Prostate gland (tissue), 2 donors: ENCODE measurements at regions of chr2 and their contacts with region 1.

Region 1: DNA sequence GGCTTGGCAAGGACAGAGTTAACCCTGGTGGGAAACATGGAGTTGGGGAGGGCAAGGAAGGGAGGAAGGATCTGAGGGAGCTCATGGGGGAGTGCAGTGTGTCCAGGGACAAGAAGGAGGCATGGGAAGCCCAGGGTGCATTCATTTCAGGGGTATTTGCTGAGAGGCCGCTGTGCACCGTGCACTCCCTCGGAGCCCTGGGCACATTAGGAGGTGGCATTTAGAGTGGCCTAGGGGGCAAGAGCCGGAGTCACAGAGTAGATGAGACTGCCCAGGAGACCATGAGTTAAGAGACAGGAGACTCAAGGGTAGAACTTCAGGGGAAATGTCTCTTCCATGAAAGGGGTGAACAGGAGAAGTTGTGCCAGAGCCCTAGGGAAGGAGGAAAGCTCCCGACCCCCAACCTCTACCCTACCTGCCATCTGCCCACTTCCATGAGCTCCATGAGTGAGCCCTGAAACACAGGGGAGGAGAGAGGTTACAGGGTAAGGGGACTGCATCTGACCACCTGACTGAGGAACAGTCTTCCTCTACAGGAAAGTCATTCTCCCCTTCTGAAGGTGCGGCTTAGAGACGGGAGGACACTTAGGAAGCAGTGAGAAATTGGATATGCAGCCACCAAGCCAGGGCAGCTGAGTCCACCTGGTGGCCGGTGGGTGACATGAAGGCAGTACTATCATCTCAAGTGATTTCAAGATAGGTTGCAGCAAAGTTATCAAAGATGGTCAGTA is 58.5 kb upstream of the COPS8 start:
- DNase-seq: peak; percentile 72
- H3K4me3 ChIP-seq: no peak overlapping the region
- H3K27ac ChIP-seq: no peak overlapping the region
- H3K4me1 ChIP-seq: no peaks in the 10 kb centered on the region
- H3K27me3 ChIP-seq: no peaks in the 10 kb centered on the region
- CTCF ChIP-seq: peak; percentile 82 to 95 (median 93)
- POLR2A ChIP-seq: no peak

Region 2: GRCh38 chr2:236352761-236353593 is 674.2 kb before region 1 on chr2:
- intact Hi-C with region 1: loop called (anchors 10 kb)
- DNase-seq: no peak
- H3K4me3 ChIP-seq: no peak overlapping the region
- H3K27ac ChIP-seq: no peak overlapping the region
- H3K4me1 ChIP-seq: no peaks in the 10 kb centered on the region
- H3K27me3 ChIP-seq: no peaks in the 10 kb centered on the region
- CTCF ChIP-seq: peak; percentile 71 to 81 (median 78)
- POLR2A ChIP-seq: no peak

Region 3: GRCh38 chr2:236512902-236513435 is 514.2 kb before region 1 on chr2:
- intact Hi-C with region 1: loop called (anchors 2 kb)
- DNase-seq: peak; percentile 51
- H3K4me3 ChIP-seq: no peak overlapping the region
- H3K27ac ChIP-seq: no peak overlapping the region
- H3K4me1 ChIP-seq: no peaks in the 10 kb centered on the region
- H3K27me3 ChIP-seq: no peaks in the 10 kb centered on the region
- CTCF ChIP-seq: peak; percentile 51 to 88 (median 82)
- POLR2A ChIP-seq: no peak